Mammary epithelial cell (primary cell): ENCODE measurements at regions of chr1 and their contacts with region 1.

Region 1: GRCh38 chr1:26574719-26575251 is 45.2 kb downstream of the RPS6KA1 start:
- DNase-seq: no peak
- H3K4me3 ChIP-seq: no peak overlapping the region
- H3K27ac ChIP-seq: no peak overlapping the region
- H3K4me1 ChIP-seq: no peaks in the 10 kb centered on the region
- H3K27me3 ChIP-seq: no peaks in the 10 kb centered on the region
- CTCF ChIP-seq: no peak

Region 2: DNA sequence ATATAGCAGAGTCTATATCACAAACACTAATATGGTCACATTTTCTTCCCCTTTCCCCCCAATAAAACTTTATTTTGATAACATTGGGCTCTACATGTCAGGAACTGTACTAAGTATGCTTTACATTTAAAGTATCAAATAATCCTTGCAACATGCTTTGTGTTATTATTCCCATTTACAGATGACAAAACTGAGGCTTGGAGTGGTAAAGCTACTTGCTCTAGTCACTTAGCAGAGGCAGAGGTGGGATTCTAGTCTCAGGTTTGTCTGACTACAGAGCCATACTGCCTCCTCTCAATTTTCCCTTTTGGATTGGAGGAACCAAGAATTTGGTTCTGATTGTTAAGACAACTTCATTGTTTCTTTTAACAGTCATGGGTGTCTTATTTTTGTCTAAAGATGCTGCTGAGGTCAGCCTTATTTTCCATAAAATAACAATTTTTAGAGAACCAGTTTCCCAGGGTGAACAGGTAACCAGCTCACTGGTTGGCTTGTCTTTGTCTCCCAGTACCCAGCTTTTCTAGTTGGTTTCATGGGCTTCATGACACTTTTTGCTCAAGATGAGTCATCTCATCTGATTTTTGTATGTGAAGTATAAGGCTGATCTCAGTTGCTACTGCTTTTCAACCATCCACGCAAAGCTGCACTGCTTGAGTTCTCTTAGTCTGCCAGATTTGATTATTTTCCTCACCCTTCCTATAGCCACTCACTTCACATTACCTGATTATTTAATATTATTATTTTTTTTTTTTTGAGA is 40.0 kb after region 1 on chr1:
- CTCF ChIA-PET with region 1: no interaction called
- dilution Hi-C with region 1: loop called (anchors 5 kb)
- in situ Hi-C with region 1: no loop called
- intact Hi-C with region 1: no loop called
- DNase-seq: no peak
- H3K4me3 ChIP-seq: no peak overlapping the region
- H3K27ac ChIP-seq: no peak overlapping the region
- H3K4me1 ChIP-seq: peaks cover 8% of the 10 kb centered on the region
- H3K27me3 ChIP-seq: peaks cover 2% of the 10 kb centered on the region
- CTCF ChIP-seq: no peak